Activated naive CD8-positive, alpha-beta T cell treated with anti-CD3 and anti-CD28 coated beads, Interleukin-2, amount 10 ng/mL, durations not matched to agents 7 days and 5 days (primary cell): ENCODE measurements at regions of chr17 and their contacts with region 1.

Region 1: DNA sequence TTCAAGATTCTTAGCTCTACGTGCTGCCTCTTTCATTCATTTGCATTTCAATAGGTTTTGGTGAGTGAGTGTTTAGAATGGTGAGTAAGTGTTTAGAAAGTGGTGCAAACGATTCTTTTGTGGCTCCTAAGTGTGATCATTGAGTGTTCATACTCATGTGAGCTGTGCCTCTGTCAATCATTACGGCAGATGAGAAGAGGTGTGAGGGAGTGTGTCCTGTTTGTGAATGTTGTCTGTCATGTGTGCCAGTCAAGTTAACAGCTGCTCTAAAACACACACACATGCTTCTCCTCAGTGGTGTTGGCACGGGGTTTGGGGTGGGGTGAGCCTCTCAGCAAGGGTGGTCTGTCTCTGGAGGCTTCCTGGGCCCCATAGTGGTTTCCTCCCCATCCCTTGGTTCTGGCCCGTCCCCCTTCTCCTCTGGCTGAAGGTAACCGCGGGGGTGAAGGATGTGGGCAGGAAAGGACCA is 11.4 kb downstream of the MYL4 start:
- DNase-seq: peak; percentile 68
- ATAC-seq: peak; percentile 81
- H3K4me3 Mint-ChIP-seq: peak overlapping the region; percentile 59
- H3K27ac Mint-ChIP-seq: peak overlapping the region; percentile 87
- H3K4me1 Mint-ChIP-seq: peaks cover 59% of the 10 kb centered on the region
- H3K27me3 Mint-ChIP-seq: peaks cover 2% of the 10 kb centered on the region

Region 2: DNA sequence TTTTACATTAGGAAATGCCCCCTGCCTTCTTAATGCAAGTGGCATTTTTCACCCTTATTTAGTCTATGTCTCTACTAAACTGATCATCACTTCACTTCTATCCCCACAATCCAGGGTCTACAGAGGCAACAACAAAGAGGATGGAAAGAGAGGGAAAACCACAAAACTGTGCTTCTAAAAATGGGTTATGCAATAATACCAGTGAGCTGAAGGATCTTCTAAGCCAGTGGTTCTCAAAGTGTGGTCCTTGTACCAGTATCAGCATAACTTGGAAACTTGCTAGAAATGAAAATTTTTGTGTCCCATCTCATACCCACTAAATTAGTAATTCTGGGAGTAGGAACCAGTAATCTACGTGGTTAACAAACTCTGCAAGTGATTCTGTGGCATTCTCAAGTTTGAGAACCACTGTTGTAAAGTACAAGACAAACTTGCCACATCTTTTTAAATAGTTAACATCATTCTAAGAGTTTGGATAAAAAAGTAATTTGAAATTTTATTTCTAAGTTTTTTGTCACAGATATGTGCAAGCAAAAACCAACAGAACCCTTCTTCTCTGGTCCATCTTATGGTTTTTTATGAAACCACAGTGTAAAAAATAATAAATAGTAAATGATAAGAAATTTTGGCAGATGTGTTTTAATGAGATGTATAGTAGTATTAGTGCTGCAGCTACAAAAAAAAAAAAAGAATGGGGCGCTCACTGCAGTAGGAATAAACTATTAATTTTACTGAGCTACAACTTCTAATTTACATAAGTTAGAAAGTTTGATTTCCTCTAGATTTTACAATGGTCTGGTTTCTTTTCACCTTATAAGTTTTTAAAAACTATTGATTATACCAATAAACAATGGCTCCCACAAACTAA is 47.6 kb before region 1 on chr17:
- POLR2A ChIA-PET with region 1: no interaction called
- DNase-seq: no peak
- ATAC-seq: no peak
- H3K4me3 Mint-ChIP-seq: no peak overlapping the region
- H3K27ac Mint-ChIP-seq: peak overlapping the region; percentile 54
- H3K4me1 Mint-ChIP-seq: peaks cover 24% of the 10 kb centered on the region
- H3K27me3 Mint-ChIP-seq: no peaks in the 10 kb centered on the region

Region 3: GRCh38 chr17:47188876-47189731 is 31.5 kb before region 1 on chr17 and contains the start of gene CDC27:
- POLR2A ChIA-PET with region 1: interaction called, 15 read pairs
- DNase-seq: peak; percentile 98
- ATAC-seq: peak; percentile 94
- H3K4me3 Mint-ChIP-seq: peak within 1 kb of the TSS; percentile 95
- H3K27ac Mint-ChIP-seq: peak within 1 kb of the TSS; percentile 96
- H3K4me1 Mint-ChIP-seq: peaks cover 46% of the 10 kb centered on the region
- H3K27me3 Mint-ChIP-seq: no peaks in the 10 kb centered on the region
- total RNA-seq, gene CDC27: 113 to 114 TPM

Region 4: GRCh38 chr17:47205419-47205963 is 15.1 kb before region 1 on chr17:
- POLR2A ChIA-PET with region 1: interaction called, 22 read pairs
- DNase-seq: no peak
- ATAC-seq: peak; percentile 74
- H3K4me3 Mint-ChIP-seq: peak overlapping the region; percentile 53
- H3K27ac Mint-ChIP-seq: peak overlapping the region; percentile 89
- H3K4me1 Mint-ChIP-seq: peaks cover 47% of the 10 kb centered on the region
- H3K27me3 Mint-ChIP-seq: no peaks in the 10 kb centered on the region

Region 5: DNA sequence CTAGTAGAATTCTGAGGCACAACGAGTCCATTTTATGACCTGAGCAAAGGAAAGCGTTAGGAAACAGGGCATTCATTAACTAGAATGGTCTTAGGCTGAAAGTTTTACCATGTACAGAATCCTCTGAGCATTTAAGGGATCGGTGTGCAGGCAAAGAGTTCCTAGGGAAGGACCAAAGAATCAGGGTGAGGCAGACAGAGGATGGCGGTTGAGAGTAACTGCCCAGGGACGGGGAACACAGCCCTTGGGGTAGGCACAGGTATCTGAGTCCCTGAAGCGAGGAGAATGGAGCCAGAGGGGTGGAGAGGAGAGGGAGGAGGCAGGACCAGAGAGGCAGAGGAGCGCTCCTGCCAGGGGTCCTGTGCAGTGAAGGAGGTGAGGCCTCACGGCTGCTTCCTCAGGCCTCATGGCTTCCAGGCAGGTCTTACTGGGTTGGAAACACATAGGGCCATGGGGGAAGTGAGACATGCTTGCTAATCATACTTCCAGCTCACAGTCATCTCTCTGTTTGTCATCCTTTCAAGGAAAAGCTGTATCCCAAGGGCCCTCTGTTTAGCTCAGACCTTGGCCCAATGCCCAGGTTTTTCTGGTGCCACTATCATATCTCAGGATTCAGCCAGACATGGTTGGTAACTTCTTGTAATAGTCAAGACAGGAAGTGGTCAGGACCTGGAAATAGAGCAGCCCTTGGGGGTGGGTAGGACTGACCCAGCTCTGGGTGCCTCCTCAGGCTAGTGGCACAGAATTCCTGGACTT is 19.2 kb after region 1 on chr17:
- POLR2A ChIA-PET with region 1: no interaction called
- DNase-seq: no peak
- ATAC-seq: no peak
- H3K4me3 Mint-ChIP-seq: no peak overlapping the region
- H3K27ac Mint-ChIP-seq: peak overlapping the region; percentile 11
- H3K4me1 Mint-ChIP-seq: peaks cover 10% of the 10 kb centered on the region
- H3K27me3 Mint-ChIP-seq: peaks cover 11% of the 10 kb centered on the region

Region 6: GRCh38 chr17:47323382-47324222 is 103.0 kb after region 1 on chr17 and contains the start of gene EFCAB13:
- POLR2A ChIA-PET with region 1: interaction called, 10 read pairs
- DNase-seq: peak; percentile 91
- ATAC-seq: peak; percentile 87
- H3K4me3 Mint-ChIP-seq: peak within 1 kb of the TSS; percentile 99
- H3K27ac Mint-ChIP-seq: peak within 1 kb of the TSS; percentile 98
- H3K4me1 Mint-ChIP-seq: peaks cover 17% of the 10 kb centered on the region
- H3K27me3 Mint-ChIP-seq: peaks cover 16% of the 10 kb centered on the region
- total RNA-seq, gene EFCAB13: 12.2 to 13.2 TPM